ENCODE measurements at regions of chr10 and their contacts with region 1.

Region 1: GRCh38 chr10:115706026-115706781 is 566.8 kb downstream of the GFRA1 start:
- DNase-seq: peak in 1 of 14 experiments; percentile 2
- ATAC-seq: no peak
- H3K4me3 ChIP-seq: no peak overlapping the region
- H3K4me3 Mint-ChIP-seq: no peak overlapping the region
- H3K27ac ChIP-seq: no peak overlapping the region
- H3K27ac Mint-ChIP-seq: no peak overlapping the region
- H3K4me1 ChIP-seq: no peaks in the 10 kb centered on the region
- H3K4me1 Mint-ChIP-seq: no peaks in the 10 kb centered on the region
- H3K27me3 ChIP-seq: no peaks in the 10 kb centered on the region
- H3K27me3 Mint-ChIP-seq: no peaks in the 10 kb centered on the region
- CTCF ChIP-seq: no peak

Region 2: GRCh38 chr10:115624448-115624847 is 81.8 kb before region 1 on chr10:
- CTCF ChIA-PET with region 1: no interaction called
- POLR2A ChIA-PET with region 1: no interaction called
- intact Hi-C with region 1: loop called in 1 of 2 experiments (anchors 2 kb)
- DNase-seq: no peak
- ATAC-seq: no peak
- H3K4me3 ChIP-seq: no peak overlapping the region
- H3K4me3 Mint-ChIP-seq: no peak overlapping the region
- H3K27ac ChIP-seq: no peak overlapping the region
- H3K27ac Mint-ChIP-seq: no peak overlapping the region
- H3K4me1 ChIP-seq: no peaks in the 10 kb centered on the region
- H3K4me1 Mint-ChIP-seq: no peaks in the 10 kb centered on the region
- H3K27me3 ChIP-seq: no peaks in the 10 kb centered on the region
- H3K27me3 Mint-ChIP-seq: no peaks in the 10 kb centered on the region
- CTCF ChIP-seq: no peak

Region 3: DNA sequence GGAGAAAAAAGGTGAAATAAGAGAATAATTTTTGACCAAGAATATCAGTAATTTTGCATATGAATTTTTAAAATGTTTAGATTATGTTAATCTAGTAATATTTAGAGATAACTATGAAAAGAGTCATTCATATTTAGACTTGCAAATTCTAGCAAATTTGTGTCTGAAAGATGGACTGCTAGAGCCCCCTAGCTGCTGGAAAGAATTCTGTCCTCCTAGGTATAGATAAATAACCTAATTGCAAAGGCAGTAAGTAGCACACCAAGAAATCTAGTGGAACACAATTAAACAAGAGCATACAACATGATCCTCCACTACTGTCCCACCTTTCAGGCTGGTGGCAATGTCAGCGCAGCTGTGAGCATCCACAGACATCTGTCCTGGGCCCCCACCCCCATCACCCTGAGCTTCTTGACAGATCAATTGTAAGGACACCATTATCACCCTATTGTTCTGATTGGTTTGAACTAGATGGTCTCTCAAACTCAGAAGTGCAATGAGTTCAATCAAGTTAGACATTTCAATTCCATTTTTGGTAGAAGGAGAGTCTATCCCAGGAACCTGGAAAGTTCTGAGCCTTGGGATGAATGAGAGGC is 581.8 kb after region 1 on chr10:
- CTCF ChIA-PET with region 1: no interaction called
- POLR2A ChIA-PET with region 1: no interaction called
- intact Hi-C with region 1: loop called in 1 of 2 experiments (anchors 5 kb)
- DNase-seq: peak in 1 of 14 experiments; percentile 15
- ATAC-seq: no peak
- H3K4me3 ChIP-seq: no peak overlapping the region
- H3K4me3 Mint-ChIP-seq: no peak overlapping the region
- H3K27ac ChIP-seq: no peak overlapping the region
- H3K27ac Mint-ChIP-seq: no peak overlapping the region
- H3K4me1 ChIP-seq: no peaks in the 10 kb centered on the region
- H3K4me1 Mint-ChIP-seq: no peaks in the 10 kb centered on the region
- H3K27me3 ChIP-seq: no peaks in the 10 kb centered on the region
- H3K27me3 Mint-ChIP-seq: peaks cover 8% of the 10 kb centered on the region
- CTCF ChIP-seq: no peak